Transverse colon (tissue), 4 donors: ENCODE measurements at regions of chr9 and their contacts with region 1.

Region 1: GRCh38 chr9:133149126-133150107 is 14.3 kb downstream of the GBGT1 start:
- DNase-seq: peak; percentile 93
- H3K4me3 ChIP-seq: peak overlapping the region in 3 of 4 donors; percentile 45 to 75 (median 64)
- H3K27ac ChIP-seq: peak overlapping the region; percentile 90 to 94 (median 94)
- H3K4me1 ChIP-seq: peaks cover 16 to 33% (median 26%) of the 10 kb centered on the region in 4 donors
- H3K27me3 ChIP-seq: no peaks in the 10 kb centered on the region
- CTCF ChIP-seq: peak in 4 of 5 experiments; percentile 12 to 62 (median 32)
- EP300 ChIP-seq: peak; percentile 25
- POLR2A ChIP-seq: peak; percentile 62

Region 2: GRCh38 chr9:133048569-133048968 is 100.8 kb before region 1 on chr9:
- in situ Hi-C with region 1: no loop called
- intact Hi-C with region 1: loop called (anchors 10 kb)
- DNase-seq: peak; percentile 31
- H3K4me3 ChIP-seq: no peak overlapping the region
- H3K27ac ChIP-seq: no peak overlapping the region
- H3K4me1 ChIP-seq: peaks cover 6 to 15% (median 10%) of the 10 kb centered on the region in 4 donors
- H3K27me3 ChIP-seq: no peaks in the 10 kb centered on the region
- CTCF ChIP-seq: peak in 4 of 5 experiments; percentile 23 to 32 (median 28)
- EP300 ChIP-seq: no peak
- POLR2A ChIP-seq: no peak

Region 3: GRCh38 chr9:133103183-133103986 is 46.0 kb before region 1 on chr9:
- in situ Hi-C with region 1: loop called in 2 of 4 experiments (anchors 5 kb)
- intact Hi-C with region 1: loop called (anchors 1 kb)
- DNase-seq: peak; percentile 77
- H3K4me3 ChIP-seq: no peak overlapping the region
- H3K27ac ChIP-seq: peak overlapping the region; percentile 8 to 40 (median 10)
- H3K4me1 ChIP-seq: peaks cover 0 to 7% (median 0%) of the 10 kb centered on the region in 4 donors
- H3K27me3 ChIP-seq: no peaks in the 10 kb centered on the region
- CTCF ChIP-seq: peak; percentile 97 to 99 (median 98)
- EP300 ChIP-seq: no peak
- POLR2A ChIP-seq: no peak

Region 4: GRCh38 chr9:135098400-135099105 is 1949.1 kb after region 1 on chr9:
- in situ Hi-C with region 1: no loop called
- intact Hi-C with region 1: no loop called
- DNase-seq: no peak
- H3K4me3 ChIP-seq: no peak overlapping the region
- H3K27ac ChIP-seq: no peak overlapping the region
- H3K4me1 ChIP-seq: no peaks in the 10 kb centered on the region
- H3K27me3 ChIP-seq: no peaks in the 10 kb centered on the region
- CTCF ChIP-seq: no peak
- EP300 ChIP-seq: no peak
- POLR2A ChIP-seq: no peak